Heart right ventricle (tissue), 16 donors: ENCODE measurements at regions of chr2 and their contacts with region 1.

Region 1: DNA sequence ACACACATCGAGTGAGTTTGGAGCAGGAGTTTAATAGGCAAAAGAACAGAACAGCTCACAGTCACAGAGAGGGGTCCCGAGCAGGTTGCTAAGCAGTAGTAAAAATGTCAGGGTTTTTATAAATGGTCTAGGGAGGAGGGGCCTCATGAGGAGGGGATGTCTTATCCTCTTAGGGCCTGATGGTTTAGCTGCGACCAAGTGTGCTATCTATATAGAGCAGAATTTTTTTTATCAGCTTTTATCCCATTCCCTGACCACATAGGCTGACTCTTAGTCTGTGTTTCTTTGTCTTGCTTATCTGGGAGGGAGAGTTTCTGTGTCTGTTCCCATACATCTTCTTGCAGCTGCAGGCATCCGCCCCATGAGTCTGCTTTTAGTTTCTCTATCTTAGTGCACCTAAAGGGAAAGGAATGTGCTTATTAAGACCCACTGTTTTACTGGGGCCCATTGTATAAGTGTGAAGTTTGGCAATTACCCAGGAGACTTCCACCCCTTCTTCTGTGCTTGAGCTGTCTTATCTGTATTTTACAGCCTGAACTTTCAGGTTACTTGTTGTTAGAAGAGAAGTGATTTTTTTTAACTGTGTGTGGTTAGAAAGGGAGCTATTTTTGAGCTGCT is 30.4 kb upstream of the GMCL1 start:
- DNase-seq: no peak
- ATAC-seq: peak in 5 of 8 donors; percentile 28 to 41 (median 38)
- H3K4me3 ChIP-seq: peak overlapping the region in 8 of 10 donors; percentile 11 to 50 (median 46)
- H3K27ac ChIP-seq: peak overlapping the region in 9 of 10 donors; percentile 21 to 80 (median 64)
- H3K4me1 ChIP-seq: peaks cover 4 to 27% (median 23%) of the 10 kb centered on the region in 9 donors
- H3K27me3 ChIP-seq: no peaks in the 10 kb centered on the region
- CTCF ChIP-seq: no peak

Region 2: GRCh38 chr2:69549421-69549820 is 249.6 kb before region 1 on chr2:
- intact Hi-C with region 1: no loop called
- DNase-seq: no peak
- ATAC-seq: no peak
- H3K4me3 ChIP-seq: no peak overlapping the region
- H3K27ac ChIP-seq: no peak overlapping the region
- H3K4me1 ChIP-seq: peaks cover 0 to 43% (median 27%) of the 10 kb centered on the region in 9 donors
- H3K27me3 ChIP-seq: no peaks in the 10 kb centered on the region
- CTCF ChIP-seq: no peak

Region 3: GRCh38 chr2:69741619-69742466 is 57.2 kb before region 1 on chr2 and contains the start of gene ANXA4:
- intact Hi-C with region 1: loop called in 1 of 10 experiments (anchors 5 kb)
- DNase-seq: peak; percentile 76 to 83
- ATAC-seq: peak; percentile 91 to 96 (median 94)
- H3K4me3 ChIP-seq: peak within 1 kb of the TSS; percentile 71 to 100 (median 91)
- H3K27ac ChIP-seq: peak within 1 kb of the TSS; percentile 81 to 96 (median 94)
- H3K4me1 ChIP-seq: peaks cover 0 to 46% (median 15%) of the 10 kb centered on the region in 9 donors
- H3K27me3 ChIP-seq: no peaks in the 10 kb centered on the region
- CTCF ChIP-seq: no peak
- total RNA-seq, gene ANXA4: 17.9 to 36.7 (median 26.2) TPM